CD4-positive, alpha-beta T cell (primary cell): ENCODE measurements at regions of chr2 and their contacts with region 1.

Region 1: DNA sequence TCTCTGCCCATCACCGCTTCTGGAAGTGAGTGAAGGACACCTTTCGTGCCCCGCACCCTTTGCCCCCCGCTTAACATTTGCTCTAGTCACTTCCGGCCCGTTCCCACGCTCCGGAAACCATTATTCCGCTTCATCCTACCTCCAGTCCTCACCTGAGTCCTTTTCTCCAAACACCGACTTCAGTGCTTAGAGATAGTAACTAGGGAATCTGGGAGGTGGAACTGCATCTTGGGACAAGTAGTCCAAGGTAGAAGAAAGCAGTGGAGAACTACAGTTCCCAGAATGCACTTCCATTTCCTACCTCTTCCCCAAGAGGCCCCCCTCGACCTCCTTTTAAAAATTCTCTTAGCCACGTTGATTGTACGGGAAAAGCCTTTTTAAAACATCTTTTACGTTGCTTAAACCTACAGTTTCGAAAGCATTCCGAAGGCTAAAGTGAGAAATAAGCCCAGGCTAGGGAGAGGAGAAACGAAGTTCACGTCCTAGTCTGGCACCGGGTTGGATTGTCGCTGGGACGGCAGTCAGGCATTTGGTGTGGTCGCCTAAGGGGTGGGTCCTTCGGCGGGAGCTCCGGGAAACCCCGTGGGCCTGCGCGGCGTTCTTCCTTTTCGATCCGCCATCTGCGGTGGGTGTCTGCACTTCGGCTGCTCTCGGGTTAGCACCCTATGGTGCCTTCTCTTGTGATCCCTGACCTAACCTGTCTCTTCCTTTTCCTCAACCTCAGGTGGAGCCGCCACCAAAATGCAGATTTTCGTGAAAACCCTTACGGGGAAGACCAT is at the starts of genes CLHC1 and RPS27A:
- DNase-seq: peak; percentile 90 to 96 (median 94)
- ATAC-seq: peak; percentile 87
- H3K4me3 ChIP-seq: peak within 1 kb of the TSS; percentile 77
- H3K4me3 Mint-ChIP-seq: peak within 1 kb of the TSS; percentile 95
- H3K27ac ChIP-seq: peak within 1 kb of the TSS; percentile 97 to 100
- H3K27ac Mint-ChIP-seq: peak within 1 kb of the TSS; percentile 92
- H3K4me1 ChIP-seq: peaks cover 31% of the 10 kb centered on the region
- H3K4me1 Mint-ChIP-seq: peaks cover 81% of the 10 kb centered on the region
- H3K27me3 ChIP-seq: no peaks in the 10 kb centered on the region
- H3K27me3 Mint-ChIP-seq: no peaks in the 10 kb centered on the region
- CTCF ChIP-seq: no peak
- total RNA-seq, gene CLHC1: 4.4 TPM
- total RNA-seq, gene RPS27A: 2,201 to 2,315 TPM

Region 2: DNA sequence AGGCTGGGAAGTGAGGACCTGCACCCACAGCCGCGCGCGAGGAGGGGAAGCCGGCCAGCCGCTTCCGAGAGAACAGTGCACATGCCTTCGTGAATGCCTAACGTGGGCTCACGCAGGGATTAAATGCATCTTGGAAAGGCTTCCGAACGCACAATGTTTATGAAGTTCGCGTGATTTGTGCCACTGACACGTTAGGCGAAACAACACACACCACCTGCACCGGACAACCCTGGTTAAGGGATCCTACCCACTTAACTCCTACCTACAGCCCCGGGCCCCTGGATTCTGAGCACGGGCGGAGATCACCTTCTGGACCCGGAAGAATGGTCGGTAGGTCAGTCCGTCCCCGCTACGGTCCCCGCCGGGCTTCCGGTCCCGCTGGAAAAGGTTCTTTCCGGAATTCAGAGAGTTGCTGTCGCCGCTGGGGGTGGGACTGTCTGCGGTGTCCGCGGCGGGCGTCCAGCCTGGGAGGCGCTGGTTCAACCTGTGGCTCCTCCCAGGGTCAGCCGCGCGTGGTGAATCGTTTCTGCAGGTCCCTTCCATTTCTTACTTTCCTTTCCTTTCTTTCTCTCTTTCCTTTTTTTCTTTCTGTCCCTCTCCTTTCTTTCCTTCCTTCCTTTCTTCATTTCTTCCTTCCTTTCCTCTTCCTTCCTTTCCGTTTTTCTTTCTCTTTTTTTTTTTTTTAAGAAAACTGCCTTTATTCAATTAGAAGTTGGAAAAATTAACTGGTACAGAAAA is 36.8 kb after region 1 on chr2 and contains the start of gene MTIF2:
- CTCF ChIA-PET with region 1: no interaction called
- POLR2A ChIA-PET with region 1: interaction called, 7 read pairs
- intact Hi-C with region 1: loop called (anchors 1 to 2 kb)
- DNase-seq: peak; percentile 68 to 93 (median 82)
- ATAC-seq: peak; percentile 86
- H3K4me3 ChIP-seq: peak within 1 kb of the TSS; percentile 87
- H3K4me3 Mint-ChIP-seq: peak within 1 kb of the TSS; percentile 96
- H3K27ac ChIP-seq: peak within 1 kb of the TSS; percentile 66 to 84
- H3K27ac Mint-ChIP-seq: peak within 1 kb of the TSS; percentile 95
- H3K4me1 ChIP-seq: peaks cover 15% of the 10 kb centered on the region
- H3K4me1 Mint-ChIP-seq: peaks cover 19% of the 10 kb centered on the region
- H3K27me3 ChIP-seq: no peaks in the 10 kb centered on the region
- H3K27me3 Mint-ChIP-seq: no peaks in the 10 kb centered on the region
- CTCF ChIP-seq: no peak
- total RNA-seq, gene MTIF2: 13.0 to 15.6 TPM

Region 3: GRCh38 chr2:55282110-55282917 is 50.0 kb after region 1 on chr2:
- CTCF ChIA-PET with region 1: no interaction called
- POLR2A ChIA-PET with region 1: interaction called, 7 read pairs
- intact Hi-C with region 1: loop called (anchors 2 kb)
- DNase-seq: peak; percentile 77 to 93 (median 86)
- ATAC-seq: peak; percentile 98
- H3K4me3 ChIP-seq: peak overlapping the region; percentile 81
- H3K4me3 Mint-ChIP-seq: peak overlapping the region; percentile 96
- H3K27ac ChIP-seq: peak overlapping the region; percentile 78 to 88
- H3K27ac Mint-ChIP-seq: peak overlapping the region; percentile 97
- H3K4me1 ChIP-seq: peaks cover 11% of the 10 kb centered on the region
- H3K4me1 Mint-ChIP-seq: peaks cover 31% of the 10 kb centered on the region
- H3K27me3 ChIP-seq: no peaks in the 10 kb centered on the region
- H3K27me3 Mint-ChIP-seq: no peaks in the 10 kb centered on the region
- CTCF ChIP-seq: no peak